ENCODE measurements at regions of chr7 and their contacts with region 1.

Region 1: DNA sequence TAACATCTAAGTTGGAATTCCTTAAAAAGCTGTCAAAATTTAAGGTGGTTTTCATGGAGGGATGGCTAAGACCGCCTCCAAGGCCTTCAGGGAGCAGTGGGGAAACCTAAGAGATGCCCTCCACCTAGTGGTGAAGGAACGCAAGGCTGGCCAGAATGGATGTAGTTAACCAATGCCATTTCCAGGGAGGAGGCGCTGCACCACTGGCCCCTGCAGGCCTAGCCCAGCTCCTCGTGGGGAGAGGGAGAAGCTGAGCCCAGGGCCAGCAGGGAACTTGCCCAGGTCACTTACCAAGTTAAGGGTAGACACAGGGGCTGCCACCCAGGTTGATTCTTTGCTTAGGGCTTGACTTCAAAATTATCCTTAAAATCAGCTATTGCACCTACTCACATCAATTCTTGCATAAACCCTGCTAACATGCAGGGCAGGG is 32.0 kb downstream of the FIGNL1 start:
- DNase-seq: peak; percentile 89
- ATAC-seq: peak; percentile 96
- H3K4me3 Mint-ChIP-seq: no peak overlapping the region
- H3K27ac Mint-ChIP-seq: no peak overlapping the region
- H3K4me1 Mint-ChIP-seq: peaks cover 24% of the 10 kb centered on the region
- H3K27me3 Mint-ChIP-seq: no peaks in the 10 kb centered on the region

Region 2: DNA sequence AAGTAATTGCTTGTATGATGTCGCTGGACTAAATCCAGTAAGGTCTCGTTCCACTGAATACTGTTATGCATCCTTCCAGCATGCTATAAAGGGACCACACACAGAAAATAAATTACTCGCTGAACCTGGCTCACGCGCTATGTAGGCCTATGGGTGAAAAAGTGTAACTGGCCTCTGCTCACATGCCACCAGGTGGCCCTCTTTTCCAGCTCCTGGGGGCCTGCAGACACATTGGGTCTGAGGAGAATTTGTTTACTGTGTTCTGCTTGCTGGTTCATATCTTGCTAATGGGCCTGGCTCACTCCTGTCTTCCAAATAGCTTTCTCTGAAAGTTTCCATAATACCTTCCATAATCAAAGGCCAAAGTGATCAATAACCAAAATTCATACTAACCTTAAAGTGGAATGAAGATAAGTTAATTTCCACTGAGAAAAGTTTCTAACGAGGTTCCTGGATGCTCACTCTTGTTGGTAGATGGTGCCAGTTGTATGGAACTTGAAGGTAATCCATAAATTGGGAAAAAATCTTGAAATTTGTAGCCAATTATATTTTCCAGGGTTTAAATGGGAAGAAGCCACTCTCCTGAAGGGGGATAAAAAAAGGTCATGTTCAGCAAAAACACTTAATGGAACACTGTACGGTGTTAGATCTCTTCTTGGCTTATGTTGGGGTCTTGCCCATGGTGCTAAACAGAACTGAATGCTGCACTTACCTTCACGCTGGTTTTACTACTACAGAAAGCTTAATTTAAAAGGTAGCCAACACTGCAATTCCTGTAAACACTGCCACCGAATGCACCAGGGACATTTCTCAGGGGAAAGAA is 298.1 kb before region 1 on chr7:
- CTCF ChIA-PET with region 1: interaction called, 11 read pairs
- POLR2A ChIA-PET with region 1: no interaction called
- intact Hi-C with region 1: loop called in 1 of 2 experiments (anchors 1 kb)
- DNase-seq: peak; percentile 66
- ATAC-seq: peak; percentile 85
- H3K4me3 Mint-ChIP-seq: no peak overlapping the region
- H3K27ac Mint-ChIP-seq: no peak overlapping the region
- H3K4me1 Mint-ChIP-seq: no peaks in the 10 kb centered on the region
- H3K27me3 Mint-ChIP-seq: peaks cover 2% of the 10 kb centered on the region

Region 3: DNA sequence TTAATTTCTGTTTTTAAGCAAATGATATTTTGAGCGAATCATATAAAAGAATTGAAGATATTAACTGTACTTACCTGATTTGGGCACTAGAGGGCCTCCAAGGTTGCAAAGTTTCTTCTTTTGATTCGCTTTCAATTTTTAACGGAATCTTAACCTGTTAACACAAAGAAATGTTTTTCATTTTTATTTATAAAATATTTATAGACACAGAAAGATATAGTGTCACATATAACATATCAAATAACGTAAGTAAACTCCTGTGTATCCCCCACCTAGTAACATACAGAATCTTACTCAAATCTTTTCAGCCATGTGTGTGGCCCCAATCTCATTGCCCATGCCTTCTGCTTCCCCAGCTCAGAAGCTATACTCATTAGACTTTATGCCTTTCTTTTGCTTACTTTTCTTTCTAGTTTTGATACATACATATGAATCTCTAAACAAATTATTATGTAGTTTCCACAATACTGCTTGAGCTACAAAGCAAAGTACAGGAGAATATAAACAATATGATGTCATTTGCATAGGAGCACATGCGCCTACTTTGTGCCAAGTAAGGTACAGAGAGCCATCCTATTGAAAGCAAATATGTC is 275.6 kb before region 1 on chr7:
- CTCF ChIA-PET with region 1: interaction called, 45 read pairs
- POLR2A ChIA-PET with region 1: no interaction called
- intact Hi-C with region 1: loop called (anchors 1 kb)
- DNase-seq: peak; percentile 51
- ATAC-seq: peak; percentile 63
- H3K4me3 Mint-ChIP-seq: peak overlapping the region; percentile 53
- H3K27ac Mint-ChIP-seq: peak overlapping the region; percentile 94
- H3K4me1 Mint-ChIP-seq: peaks cover 43% of the 10 kb centered on the region
- H3K27me3 Mint-ChIP-seq: no peaks in the 10 kb centered on the region

Region 4: DNA sequence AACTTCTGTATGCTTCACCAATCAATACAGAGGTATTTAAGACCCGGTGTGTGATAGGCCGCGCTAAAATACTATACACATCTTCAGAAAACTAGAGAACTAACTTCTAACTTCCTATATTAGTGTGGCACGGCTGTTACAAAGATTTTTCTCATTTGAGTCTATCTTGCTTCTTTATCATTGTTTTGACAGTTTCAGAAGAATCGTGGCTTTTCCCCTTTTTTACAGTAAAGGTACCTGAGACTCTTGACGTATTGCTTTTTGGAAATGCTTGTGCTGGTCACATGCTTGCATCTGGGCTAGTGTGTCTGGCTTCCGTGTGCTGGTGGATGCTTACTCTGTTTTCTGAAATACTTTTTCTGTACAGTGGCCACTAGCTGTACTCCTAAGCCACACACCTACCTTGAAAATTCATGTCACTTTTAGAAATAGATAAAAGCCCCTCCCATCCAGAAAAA is 100.9 kb before region 1 on chr7:
- CTCF ChIA-PET with region 1: interaction called, 6 read pairs
- POLR2A ChIA-PET with region 1: no interaction called
- intact Hi-C with region 1: loop called in 1 of 2 experiments (anchors 5 kb)
- DNase-seq: peak; percentile 73
- ATAC-seq: peak; percentile 82
- H3K4me3 Mint-ChIP-seq: peak overlapping the region; percentile 95
- H3K27ac Mint-ChIP-seq: peak overlapping the region; percentile 100
- H3K4me1 Mint-ChIP-seq: peaks cover 93% of the 10 kb centered on the region
- H3K27me3 Mint-ChIP-seq: no peaks in the 10 kb centered on the region

Region 5: GRCh38 chr7:50397320-50397970 is 20.7 kb before region 1 on chr7:
- CTCF ChIA-PET with region 1: interaction called, 10 read pairs
- POLR2A ChIA-PET with region 1: no interaction called
- intact Hi-C with region 1: no loop called
- DNase-seq: peak; percentile 63
- ATAC-seq: peak; percentile 12
- H3K4me3 Mint-ChIP-seq: peak overlapping the region; percentile 26
- H3K27ac Mint-ChIP-seq: peak overlapping the region; percentile 82
- H3K4me1 Mint-ChIP-seq: peaks cover 80% of the 10 kb centered on the region
- H3K27me3 Mint-ChIP-seq: no peaks in the 10 kb centered on the region

Region 6: GRCh38 chr7:50406935-50407538 is 11.1 kb before region 1 on chr7:
- CTCF ChIA-PET with region 1: interaction called, 17 read pairs
- POLR2A ChIA-PET with region 1: no interaction called
- intact Hi-C with region 1: no loop called
- DNase-seq: no peak
- ATAC-seq: peak; percentile 19
- H3K4me3 Mint-ChIP-seq: no peak overlapping the region
- H3K27ac Mint-ChIP-seq: no peak overlapping the region
- H3K4me1 Mint-ChIP-seq: peaks cover 82% of the 10 kb centered on the region
- H3K27me3 Mint-ChIP-seq: no peaks in the 10 kb centered on the region

Region 7: GRCh38 chr7:50436133-50436806 is 18.2 kb after region 1 on chr7:
- CTCF ChIA-PET with region 1: interaction called, 10 read pairs
- POLR2A ChIA-PET with region 1: no interaction called
- intact Hi-C with region 1: no loop called
- DNase-seq: no peak
- ATAC-seq: no peak
- H3K4me3 Mint-ChIP-seq: no peak overlapping the region
- H3K27ac Mint-ChIP-seq: no peak overlapping the region
- H3K4me1 Mint-ChIP-seq: no peaks in the 10 kb centered on the region
- H3K27me3 Mint-ChIP-seq: no peaks in the 10 kb centered on the region

Region 8: GRCh38 chr7:50706451-50706937 is 288.4 kb after region 1 on chr7:
- CTCF ChIA-PET with region 1: no interaction called
- POLR2A ChIA-PET with region 1: no interaction called
- intact Hi-C with region 1: no loop called
- DNase-seq: no peak
- ATAC-seq: no peak
- H3K4me3 Mint-ChIP-seq: no peak overlapping the region
- H3K27ac Mint-ChIP-seq: no peak overlapping the region
- H3K4me1 Mint-ChIP-seq: no peaks in the 10 kb centered on the region
- H3K27me3 Mint-ChIP-seq: no peaks in the 10 kb centered on the region

Region 9: GRCh38 chr7:50869108-50869725 is 451.1 kb after region 1 on chr7:
- CTCF ChIA-PET with region 1: no interaction called
- POLR2A ChIA-PET with region 1: no interaction called
- intact Hi-C with region 1: no loop called
- DNase-seq: no peak
- ATAC-seq: no peak
- H3K4me3 Mint-ChIP-seq: no peak overlapping the region
- H3K27ac Mint-ChIP-seq: no peak overlapping the region
- H3K4me1 Mint-ChIP-seq: no peaks in the 10 kb centered on the region
- H3K27me3 Mint-ChIP-seq: peaks cover 3% of the 10 kb centered on the region

Measured in activated CD4-positive, alpha-beta T cell treated with anti-CD3 and anti-CD28 coated beads for 36 hours (primary cell).